H1 (cell line): ENCODE measurements at regions of chr22 and their contacts with region 1.

Region 1: DNA sequence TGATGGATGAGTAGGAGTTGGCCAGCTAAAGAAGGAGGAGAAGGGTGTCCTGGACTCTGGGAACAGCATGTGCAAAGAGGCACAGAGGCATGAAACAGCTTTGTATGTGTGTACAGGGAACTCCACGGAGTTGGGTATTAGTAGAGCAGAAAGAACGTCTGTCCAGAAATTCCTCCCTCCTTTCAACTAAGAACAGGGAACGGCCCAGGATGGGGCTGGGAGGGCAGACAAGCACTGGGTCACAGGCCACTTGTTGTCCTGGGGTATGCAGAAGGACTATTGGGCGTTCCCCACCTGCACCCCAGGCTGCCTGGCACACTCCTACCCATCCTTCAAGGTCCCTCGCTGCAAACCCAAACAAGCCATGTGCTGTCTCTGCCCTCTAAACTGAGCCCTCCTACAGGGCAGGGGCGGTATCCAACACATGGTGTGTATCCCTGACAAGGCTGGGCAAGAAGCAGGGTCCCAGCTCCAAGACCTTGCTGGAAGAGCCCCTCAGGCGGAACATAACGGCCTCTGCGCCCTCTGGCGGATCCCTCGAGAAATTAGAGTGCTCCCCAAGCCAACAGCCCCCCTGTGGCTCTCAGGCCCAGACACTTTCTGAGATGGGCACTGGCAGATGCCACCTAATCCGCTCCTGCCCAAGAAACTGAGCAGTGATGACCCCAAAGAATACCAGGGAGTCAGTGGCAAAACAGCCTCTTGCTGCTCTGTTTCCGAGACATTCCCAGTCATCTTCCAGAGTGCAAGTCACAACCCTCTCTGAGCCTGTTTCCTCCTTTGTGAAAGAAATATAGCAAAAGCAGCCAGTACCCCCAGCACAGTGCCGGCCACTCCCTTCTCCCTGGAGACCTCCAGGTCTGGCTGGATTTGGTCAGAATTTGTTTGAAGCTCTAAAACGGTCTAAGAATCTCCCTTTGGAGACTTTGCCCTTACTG is 1.6 kb upstream of the ELFN2 start:
- DNase-seq: peak; percentile 56 to 83
- H3K4me3 ChIP-seq: no peak overlapping the region
- H3K27ac ChIP-seq: no peak overlapping the region
- H3K4me1 ChIP-seq: peaks cover 0 to 24% (median 16%) of the 10 kb centered on the region in 4 experiments; a peak in 6 of 7 replicates
- H3K27me3 ChIP-seq: peaks cover 29 to 43% (median 38%) of the 10 kb centered on the region in 4 experiments
- CTCF ChIP-seq: peak; percentile 73 to 92 (median 90)
- EP300 ChIP-seq: no peak
- POLR2A ChIP-seq: no peak
- RAD21 ChIP-seq: peak; percentile 80 to 84

Region 2: GRCh38 chr22:37316875-37317371 is 112.0 kb before region 1 on chr22:
- CTCF ChIA-PET with region 1: interaction called, 116 read pairs
- POLR2A ChIA-PET with region 1: interaction called, 4 read pairs
- DNase-seq: peak; percentile 34 to 85
- H3K4me3 ChIP-seq: no peak overlapping the region
- H3K27ac ChIP-seq: no peak overlapping the region
- H3K4me1 ChIP-seq: peaks cover 0 to 6% (median 0%) of the 10 kb centered on the region in 4 experiments; a peak in 2 of 7 replicates
- H3K27me3 ChIP-seq: no peaks in the 10 kb centered on the region
- CTCF ChIP-seq: peak; percentile 95 to 99 (median 96)
- EP300 ChIP-seq: no peak
- POLR2A ChIP-seq: no peak
- RAD21 ChIP-seq: peak; percentile 98 to 99

Region 3: GRCh38 chr22:37330200-37331033 is 98.5 kb before region 1 on chr22:
- CTCF ChIA-PET with region 1: interaction called, 56 read pairs
- POLR2A ChIA-PET with region 1: interaction called, 4 read pairs
- DNase-seq: peak; percentile 69 to 91
- H3K4me3 ChIP-seq: no peak overlapping the region
- H3K27ac ChIP-seq: no peak overlapping the region
- H3K4me1 ChIP-seq: peaks cover 0 to 15% (median 4%) of the 10 kb centered on the region in 4 experiments; a peak in 5 of 7 replicates
- H3K27me3 ChIP-seq: peaks cover 0 to 27% (median 12%) of the 10 kb centered on the region in 4 experiments; a peak in 5 of 7 replicates
- CTCF ChIP-seq: peak; percentile 44 to 81 (median 73)
- EP300 ChIP-seq: no peak
- POLR2A ChIP-seq: no peak
- RAD21 ChIP-seq: peak; percentile 13 to 21; a peak in 1 of 4 replicates

Region 4: GRCh38 chr22:37383341-37383740 is 45.6 kb before region 1 on chr22:
- CTCF ChIA-PET with region 1: interaction called, 12 read pairs
- POLR2A ChIA-PET with region 1: no interaction called
- DNase-seq: no peak
- H3K4me3 ChIP-seq: no peak overlapping the region
- H3K27ac ChIP-seq: peak overlapping the region; percentile 42; the same call in 1 of the 2 replicates
- H3K4me1 ChIP-seq: peaks cover 0 to 6% (median 1%) of the 10 kb centered on the region in 4 experiments; a peak in 4 of 7 replicates
- H3K27me3 ChIP-seq: no peaks in the 10 kb centered on the region
- CTCF ChIP-seq: no peak
- EP300 ChIP-seq: no peak
- POLR2A ChIP-seq: no peak
- RAD21 ChIP-seq: no peak

Region 5: GRCh38 chr22:37448511-37449127 is 19.7 kb after region 1 on chr22:
- CTCF ChIA-PET with region 1: interaction called, 22 read pairs
- POLR2A ChIA-PET with region 1: no interaction called
- DNase-seq: no peak
- H3K4me3 ChIP-seq: no peak overlapping the region
- H3K27ac ChIP-seq: no peak overlapping the region
- H3K4me1 ChIP-seq: peaks cover 0 to 2% (median 0%) of the 10 kb centered on the region in 4 experiments; a peak in 1 of 7 replicates
- H3K27me3 ChIP-seq: peaks cover 0 to 2% (median 0%) of the 10 kb centered on the region in 4 experiments; a peak in 1 of 7 replicates
- CTCF ChIP-seq: no peak
- EP300 ChIP-seq: no peak
- POLR2A ChIP-seq: no peak
- RAD21 ChIP-seq: no peak